ENCODE measurements at regions of chr3 and their contacts with region 1.

Region 1: GRCh38 chr3:122609798-122610559 is 32.5 kb downstream of the PARP15 start:
- DNase-seq: peak; percentile 37
- H3K4me3 Mint-ChIP-seq: peak overlapping the region; percentile 17
- H3K27ac Mint-ChIP-seq: peak overlapping the region; percentile 87
- H3K4me1 Mint-ChIP-seq: peaks cover 21% of the 10 kb centered on the region
- H3K27me3 Mint-ChIP-seq: no peaks in the 10 kb centered on the region

Region 2: GRCh38 chr3:122586773-122587485 is 23.1 kb before region 1 on chr3:
- CTCF ChIA-PET with region 1: no interaction called
- POLR2A ChIA-PET with region 1: interaction called, 4 read pairs
- intact Hi-C with region 1: loop called (anchors 1 kb)
- DNase-seq: no peak
- H3K4me3 Mint-ChIP-seq: no peak overlapping the region
- H3K27ac Mint-ChIP-seq: peak overlapping the region; percentile 24
- H3K4me1 Mint-ChIP-seq: peaks cover 43% of the 10 kb centered on the region
- H3K27me3 Mint-ChIP-seq: no peaks in the 10 kb centered on the region

Region 3: GRCh38 chr3:122646146-122646988 is 36.4 kb after region 1 on chr3:
- CTCF ChIA-PET with region 1: no interaction called
- POLR2A ChIA-PET with region 1: interaction called, 3 read pairs
- intact Hi-C with region 1: loop called (anchors 1 kb)
- DNase-seq: peak; percentile 31
- H3K4me3 Mint-ChIP-seq: peak overlapping the region; percentile 6
- H3K27ac Mint-ChIP-seq: peak overlapping the region; percentile 65
- H3K4me1 Mint-ChIP-seq: peaks cover 35% of the 10 kb centered on the region
- H3K27me3 Mint-ChIP-seq: no peaks in the 10 kb centered on the region

Region 4: DNA sequence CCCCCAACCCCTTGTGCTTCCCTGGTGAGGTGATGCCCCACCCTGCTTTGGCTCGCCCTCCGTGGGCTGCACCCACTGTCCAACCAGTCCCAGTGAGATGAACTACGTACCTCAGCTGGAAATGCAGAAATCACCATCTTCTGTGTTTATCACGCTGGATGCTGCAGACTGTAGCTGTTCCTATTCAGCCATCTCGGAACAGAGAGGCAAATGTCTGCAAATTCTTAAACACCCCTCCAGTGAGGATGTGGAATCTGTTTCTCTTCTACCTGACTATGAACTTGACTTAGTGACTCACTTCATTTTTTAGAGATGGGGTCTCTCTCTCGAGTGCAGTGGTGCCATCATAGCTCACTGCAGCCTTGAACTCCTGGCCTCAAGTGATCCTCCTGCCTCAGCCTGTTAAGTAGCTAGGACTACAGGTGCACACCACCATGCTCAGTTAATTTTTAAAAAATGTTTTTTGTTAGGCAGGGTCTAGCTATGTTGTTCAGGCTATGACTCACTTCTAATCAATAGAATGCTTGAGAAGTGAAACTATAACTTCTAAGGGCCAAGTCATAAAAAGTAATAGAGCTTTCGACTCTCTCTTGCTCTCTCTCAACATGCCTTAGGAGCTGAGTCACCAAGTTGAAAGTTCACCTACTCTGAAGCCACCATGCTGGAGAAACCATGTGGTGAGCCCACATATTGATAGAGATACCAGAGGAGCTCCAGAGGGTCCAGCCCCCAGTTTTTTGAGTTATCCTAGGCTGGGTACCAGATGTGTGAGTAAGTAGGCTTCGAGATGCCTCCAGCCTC is 59.2 kb after region 1 on chr3:
- CTCF ChIA-PET with region 1: no interaction called
- POLR2A ChIA-PET with region 1: interaction called, 4 read pairs
- intact Hi-C with region 1: loop called (anchors 1 kb)
- DNase-seq: peak; percentile 64
- H3K4me3 Mint-ChIP-seq: no peak overlapping the region
- H3K27ac Mint-ChIP-seq: peak overlapping the region; percentile 25
- H3K4me1 Mint-ChIP-seq: peaks cover 15% of the 10 kb centered on the region
- H3K27me3 Mint-ChIP-seq: no peaks in the 10 kb centered on the region

Measured in activated CD4-positive, alpha-beta memory T cell treated with anti-CD3 and anti-CD28 coated beads for 36 hours (primary cell).